Ovary (tissue), 10 donors: ENCODE measurements at regions of chr12 and their contacts with region 1.

Region 1: GRCh38 chr12:132828706-132829534 is at the start of gene GOLGA3:
- DNase-seq: peak; percentile 92 to 95 (median 93)
- H3K4me3 ChIP-seq: peak within 1 kb of the TSS; percentile 86
- H3K27ac ChIP-seq: peak within 1 kb of the TSS; percentile 79 to 97
- H3K4me1 ChIP-seq: peaks cover 6% of the 10 kb centered on the region
- H3K27me3 ChIP-seq: no peaks in the 10 kb centered on the region
- CTCF ChIP-seq: peak in 1 of 3 donors; percentile 40
- EP300 ChIP-seq: peak; percentile 57
- POLR2A ChIP-seq: peak; percentile 63
- total RNA-seq, gene GOLGA3: 31.1 to 76.0 (median 52.4) TPM

Region 2: GRCh38 chr12:131836193-131836592 is 992.7 kb before region 1 on chr12:
- intact Hi-C with region 1: loop called in 1 of 4 experiments (anchors 5 kb)
- DNase-seq: no peak
- H3K4me3 ChIP-seq: no peak overlapping the region
- H3K27ac ChIP-seq: no peak overlapping the region
- H3K4me1 ChIP-seq: peaks cover 5% of the 10 kb centered on the region
- H3K27me3 ChIP-seq: no peaks in the 10 kb centered on the region
- CTCF ChIP-seq: no peak
- EP300 ChIP-seq: no peak
- POLR2A ChIP-seq: no peak

Region 3: GRCh38 chr12:132771126-132771838 is 57.6 kb before region 1 on chr12:
- intact Hi-C with region 1: loop called in 1 of 4 experiments (anchors 10 kb)
- DNase-seq: no peak
- H3K4me3 ChIP-seq: no peak overlapping the region
- H3K27ac ChIP-seq: no peak overlapping the region
- H3K4me1 ChIP-seq: peaks cover 11% of the 10 kb centered on the region
- H3K27me3 ChIP-seq: no peaks in the 10 kb centered on the region
- CTCF ChIP-seq: no peak
- EP300 ChIP-seq: no peak
- POLR2A ChIP-seq: no peak